GM12878 (cell line): ENCODE measurements at regions of chr4 and their contacts with region 1.

Region 1: GRCh38 chr4:55993994-55994663 is 45.4 kb downstream of the CEP135 start:
- DNase-seq: peak; percentile 31
- ATAC-seq: peak; percentile 88
- H3K4me3 ChIP-seq: no peak overlapping the region
- H3K27ac ChIP-seq: peak overlapping the region; percentile 9; the same call in 1 of the 2 replicates
- H3K4me1 ChIP-seq: peaks cover 10% of the 10 kb centered on the region
- H3K27me3 ChIP-seq: no peaks in the 10 kb centered on the region
- CTCF ChIP-seq: no peak
- EP300 ChIP-seq: no peak
- POLR2A ChIP-seq: no peak
- RAD21 ChIP-seq: 0 out of 2 replicates have a peak, but pooled peaks have one; percentile 0

Region 2: GRCh38 chr4:55485821-55486220 is 508.3 kb before region 1 on chr4:
- CTCF ChIA-PET with region 1: no interaction called
- POLR2A ChIA-PET with region 1: no interaction called
- RAD21 ChIA-PET with region 1: no interaction called
- SMC1A ChIA-PET with region 1: no interaction called
- in situ Hi-C with region 1: no loop called
- intact Hi-C with region 1: no loop called
- DNase-seq: no peak
- ATAC-seq: no peak
- H3K4me3 ChIP-seq: no peak overlapping the region
- H3K27ac ChIP-seq: no peak overlapping the region
- H3K4me1 ChIP-seq: no peaks in the 10 kb centered on the region
- H3K27me3 ChIP-seq: no peaks in the 10 kb centered on the region
- CTCF ChIP-seq: no peak
- EP300 ChIP-seq: no peak
- POLR2A ChIP-seq: no peak
- RAD21 ChIP-seq: no peak

Region 3: GRCh38 chr4:55955710-55956109 is 38.4 kb before region 1 on chr4:
- CTCF ChIA-PET with region 1: interaction called, 3 read pairs
- POLR2A ChIA-PET with region 1: no interaction called
- RAD21 ChIA-PET with region 1: interaction called, 72 read pairs
- SMC1A ChIA-PET with region 1: interaction called, 14 read pairs
- in situ Hi-C with region 1: no loop called
- intact Hi-C with region 1: no loop called
- DNase-seq: no peak
- ATAC-seq: no peak
- H3K4me3 ChIP-seq: no peak overlapping the region
- H3K27ac ChIP-seq: no peak overlapping the region
- H3K4me1 ChIP-seq: no peaks in the 10 kb centered on the region
- H3K27me3 ChIP-seq: no peaks in the 10 kb centered on the region
- CTCF ChIP-seq: no peak
- EP300 ChIP-seq: no peak
- POLR2A ChIP-seq: no peak
- RAD21 ChIP-seq: no peak

Region 4: GRCh38 chr4:55980725-55981124 is 13.4 kb before region 1 on chr4:
- CTCF ChIA-PET with region 1: interaction called, 7 read pairs
- POLR2A ChIA-PET with region 1: interaction called, 8 read pairs
- RAD21 ChIA-PET with region 1: interaction called, 14 read pairs
- SMC1A ChIA-PET with region 1: interaction called, 54 read pairs
- in situ Hi-C with region 1: no loop called
- intact Hi-C with region 1: no loop called
- DNase-seq: peak; percentile 21
- ATAC-seq: peak; percentile 83
- H3K4me3 ChIP-seq: no peak overlapping the region
- H3K27ac ChIP-seq: peak overlapping the region; percentile 40
- H3K4me1 ChIP-seq: peaks cover 6% of the 10 kb centered on the region
- H3K27me3 ChIP-seq: no peaks in the 10 kb centered on the region
- CTCF ChIP-seq: no peak
- EP300 ChIP-seq: no peak
- POLR2A ChIP-seq: no peak
- RAD21 ChIP-seq: no peak

Region 5: GRCh38 chr4:56004235-56004634 is 10.1 kb after region 1 on chr4:
- CTCF ChIA-PET with region 1: interaction called, 3 read pairs
- POLR2A ChIA-PET with region 1: interaction called, 4 read pairs
- RAD21 ChIA-PET with region 1: interaction called, 4 read pairs
- SMC1A ChIA-PET with region 1: interaction called, 19 read pairs
- in situ Hi-C with region 1: no loop called
- intact Hi-C with region 1: no loop called
- DNase-seq: no peak
- ATAC-seq: no peak
- H3K4me3 ChIP-seq: no peak overlapping the region
- H3K27ac ChIP-seq: no peak overlapping the region
- H3K4me1 ChIP-seq: no peaks in the 10 kb centered on the region
- H3K27me3 ChIP-seq: no peaks in the 10 kb centered on the region
- CTCF ChIP-seq: no peak
- EP300 ChIP-seq: no peak
- POLR2A ChIP-seq: no peak
- RAD21 ChIP-seq: no peak